Heart left ventricle (tissue), 16 donors: ENCODE measurements at regions of chr3 and their contacts with region 1.

Region 1: GRCh38 chr3:61725851-61726333 is 164.5 kb downstream of the PTPRG start:
- DNase-seq: peak in 2 of 5 donors; percentile 34 to 37
- ATAC-seq: peak; percentile 79 to 90 (median 85)
- H3K4me3 ChIP-seq: no peak overlapping the region
- H3K27ac ChIP-seq: peak overlapping the region in 11 of 12 donors; percentile 16 to 73 (median 60)
- H3K4me1 ChIP-seq: peaks cover 0 to 59% (median 20%) of the 10 kb centered on the region in 12 donors
- H3K27me3 ChIP-seq: no peaks in the 10 kb centered on the region
- CTCF ChIP-seq: no peak
- POLR2A ChIP-seq: no peak

Region 2: GRCh38 chr3:61574854-61575253 is 151.0 kb before region 1 on chr3:
- intact Hi-C with region 1: loop called in 1 of 10 experiments (anchors 10 kb)
- DNase-seq: no peak
- ATAC-seq: peak in 2 of 4 donors; percentile 23 to 33
- H3K4me3 ChIP-seq: no peak overlapping the region
- H3K27ac ChIP-seq: peak overlapping the region in 1 of 12 donors; percentile 24
- H3K4me1 ChIP-seq: peaks cover 0 to 82% (median 48%) of the 10 kb centered on the region in 12 donors
- H3K27me3 ChIP-seq: no peaks in the 10 kb centered on the region
- CTCF ChIP-seq: no peak
- POLR2A ChIP-seq: no peak

Region 3: GRCh38 chr3:61847784-61848462 is 122.0 kb after region 1 on chr3:
- intact Hi-C with region 1: loop called in 1 of 10 experiments (anchors 10 kb)
- DNase-seq: peak; percentile 38 to 74 (median 71)
- ATAC-seq: peak; percentile 74 to 92 (median 86)
- H3K4me3 ChIP-seq: peak overlapping the region in 8 of 12 donors; percentile 6 to 26 (median 12)
- H3K27ac ChIP-seq: peak overlapping the region; percentile 74 to 93 (median 84)
- H3K4me1 ChIP-seq: peaks cover 16 to 67% (median 47%) of the 10 kb centered on the region in 12 donors
- H3K27me3 ChIP-seq: no peaks in the 10 kb centered on the region
- CTCF ChIP-seq: no peak
- POLR2A ChIP-seq: no peak